PC-9 (cell line): ENCODE measurements at regions of chr11 and their contacts with region 1.

Region 1: DNA sequence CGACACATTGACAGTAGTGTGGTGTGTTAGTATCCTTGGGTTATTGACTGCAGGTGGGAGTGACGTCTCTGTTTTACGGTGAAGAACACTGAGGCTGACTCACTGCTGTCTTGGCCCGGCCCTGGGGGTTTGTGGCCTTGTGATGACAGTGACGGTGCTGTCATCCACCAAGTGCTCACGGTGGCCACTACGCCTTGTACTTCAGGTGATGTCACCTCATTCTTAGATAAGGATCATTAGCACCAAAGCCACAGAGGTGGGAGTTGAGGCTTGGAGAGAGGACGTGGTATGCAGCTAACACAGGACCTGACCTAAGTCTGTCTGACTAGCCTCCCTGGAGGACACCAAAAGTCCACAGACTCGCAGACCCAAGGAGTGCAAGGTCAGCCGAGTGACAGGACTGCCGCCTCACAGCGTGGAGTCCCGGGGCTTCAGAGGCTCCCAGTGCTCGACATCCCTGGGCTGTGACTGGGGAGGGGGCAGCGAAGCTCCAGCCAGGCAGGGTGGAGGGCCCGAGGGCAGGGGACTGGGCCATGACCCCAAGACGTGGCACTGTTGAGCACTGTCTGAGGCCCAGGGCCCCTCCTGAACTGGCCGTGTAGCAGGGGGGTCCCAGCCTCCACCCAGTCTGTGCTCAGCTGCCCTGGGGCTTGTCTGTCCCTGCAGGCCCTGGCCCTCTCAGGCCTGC is 56.5 kb downstream of the NAT10 start:
- DNase-seq: peak; percentile 17 to 53
- H3K4me3 ChIP-seq: no peak overlapping the region
- H3K27ac ChIP-seq: no peak overlapping the region
- H3K4me1 ChIP-seq: peaks cover 17% of the 10 kb centered on the region
- H3K27me3 ChIP-seq: no peaks in the 10 kb centered on the region
- CTCF ChIP-seq: no peak

Region 2: GRCh38 chr11:34105079-34105956 is 56.6 kb before region 1 on chr11 and contains the start of gene NAT10:
- CTCF ChIA-PET with region 1: no interaction called
- POLR2A ChIA-PET with region 1: no interaction called
- intact Hi-C with region 1: no loop called
- DNase-seq: peak; percentile 97
- H3K4me3 ChIP-seq: peak within 1 kb of the TSS; percentile 88
- H3K27ac ChIP-seq: peak within 1 kb of the TSS; percentile 90
- H3K4me1 ChIP-seq: peaks cover 20% of the 10 kb centered on the region
- H3K27me3 ChIP-seq: no peaks in the 10 kb centered on the region
- CTCF ChIP-seq: no peak
- total RNA-seq, gene NAT10: 53.2 and 62.3 TPM in 2 replicates

Region 3: DNA sequence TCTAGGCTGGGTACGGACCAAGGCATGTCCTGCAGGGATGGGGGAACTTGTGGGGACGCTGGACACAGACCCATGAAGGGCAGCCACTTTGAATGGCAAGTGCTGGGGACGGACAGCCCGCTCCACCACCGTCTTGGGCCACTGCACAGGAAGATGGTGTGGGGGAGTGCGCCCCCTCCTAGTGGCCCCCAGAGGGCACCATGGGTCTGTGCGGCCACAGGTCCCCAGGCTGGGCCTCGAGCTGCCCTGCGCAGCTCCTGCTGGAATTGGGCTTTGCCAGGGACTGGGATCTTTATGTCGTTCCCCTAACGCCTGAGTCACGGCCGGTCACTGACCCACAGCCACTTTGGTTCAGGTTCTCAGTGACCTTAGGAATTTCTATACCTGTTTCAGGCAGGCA is 12.2 kb before region 1 on chr11:
- CTCF ChIA-PET with region 1: no interaction called
- POLR2A ChIA-PET with region 1: no interaction called
- intact Hi-C with region 1: no loop called
- DNase-seq: peak in 1 of 2 experiments; percentile 33
- H3K4me3 ChIP-seq: no peak overlapping the region
- H3K27ac ChIP-seq: no peak overlapping the region
- H3K4me1 ChIP-seq: no peaks in the 10 kb centered on the region
- H3K27me3 ChIP-seq: no peaks in the 10 kb centered on the region
- CTCF ChIP-seq: 0 out of 2 replicates have a peak, but pooled peaks have one; percentile 49

Region 4: DNA sequence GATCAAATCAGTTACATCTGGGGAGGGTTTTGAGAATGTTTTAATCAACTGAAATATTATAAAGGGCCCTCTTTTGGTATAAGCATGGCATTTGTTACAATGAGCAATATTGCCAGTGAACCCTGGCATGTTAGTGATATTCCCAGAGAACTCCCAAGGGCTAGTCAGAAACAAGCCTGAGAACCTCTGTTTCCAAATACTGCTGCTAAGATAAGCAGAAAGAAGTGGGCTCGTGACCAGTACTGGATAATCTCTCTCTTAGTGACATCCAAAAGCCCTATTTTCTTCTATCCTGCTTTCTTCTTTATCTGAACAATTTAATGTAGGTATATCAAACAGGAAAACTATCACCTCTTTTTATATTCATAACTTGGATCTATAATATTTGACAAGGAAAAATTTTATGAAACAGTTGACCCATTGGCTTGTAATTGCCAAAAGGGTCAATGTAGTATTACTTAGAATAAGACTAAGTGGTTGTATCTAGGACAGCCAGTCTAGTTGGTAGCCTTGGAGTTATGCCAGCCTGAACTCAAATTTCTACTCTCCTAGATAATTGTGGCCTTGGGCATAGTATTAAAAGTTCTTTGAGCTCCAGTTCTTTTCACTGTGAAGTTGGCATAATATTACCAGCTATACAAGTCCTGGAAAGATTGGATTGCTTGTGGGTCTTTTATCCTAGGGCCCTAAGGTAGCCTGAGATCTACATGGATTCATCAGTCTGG is 292.5 kb after region 1 on chr11:
- CTCF ChIA-PET with region 1: no interaction called
- POLR2A ChIA-PET with region 1: interaction called, 31 read pairs
- intact Hi-C with region 1: no loop called
- DNase-seq: no peak
- H3K4me3 ChIP-seq: no peak overlapping the region
- H3K27ac ChIP-seq: no peak overlapping the region
- H3K4me1 ChIP-seq: no peaks in the 10 kb centered on the region
- H3K27me3 ChIP-seq: no peaks in the 10 kb centered on the region
- CTCF ChIP-seq: no peak

Region 5: GRCh38 chr11:34492806-34493414 is 331.0 kb after region 1 on chr11:
- CTCF ChIA-PET with region 1: no interaction called
- POLR2A ChIA-PET with region 1: no interaction called
- intact Hi-C with region 1: loop called (anchors 2 kb)
- DNase-seq: peak; percentile 41 to 62
- H3K4me3 ChIP-seq: no peak overlapping the region
- H3K27ac ChIP-seq: no peak overlapping the region
- H3K4me1 ChIP-seq: peaks cover 8% of the 10 kb centered on the region
- H3K27me3 ChIP-seq: no peaks in the 10 kb centered on the region
- CTCF ChIP-seq: peak; percentile 91